Naive thymus-derived CD8-positive, alpha-beta T cell (primary cell): ENCODE measurements at regions of chr2 and their contacts with region 1.

Region 1: DNA sequence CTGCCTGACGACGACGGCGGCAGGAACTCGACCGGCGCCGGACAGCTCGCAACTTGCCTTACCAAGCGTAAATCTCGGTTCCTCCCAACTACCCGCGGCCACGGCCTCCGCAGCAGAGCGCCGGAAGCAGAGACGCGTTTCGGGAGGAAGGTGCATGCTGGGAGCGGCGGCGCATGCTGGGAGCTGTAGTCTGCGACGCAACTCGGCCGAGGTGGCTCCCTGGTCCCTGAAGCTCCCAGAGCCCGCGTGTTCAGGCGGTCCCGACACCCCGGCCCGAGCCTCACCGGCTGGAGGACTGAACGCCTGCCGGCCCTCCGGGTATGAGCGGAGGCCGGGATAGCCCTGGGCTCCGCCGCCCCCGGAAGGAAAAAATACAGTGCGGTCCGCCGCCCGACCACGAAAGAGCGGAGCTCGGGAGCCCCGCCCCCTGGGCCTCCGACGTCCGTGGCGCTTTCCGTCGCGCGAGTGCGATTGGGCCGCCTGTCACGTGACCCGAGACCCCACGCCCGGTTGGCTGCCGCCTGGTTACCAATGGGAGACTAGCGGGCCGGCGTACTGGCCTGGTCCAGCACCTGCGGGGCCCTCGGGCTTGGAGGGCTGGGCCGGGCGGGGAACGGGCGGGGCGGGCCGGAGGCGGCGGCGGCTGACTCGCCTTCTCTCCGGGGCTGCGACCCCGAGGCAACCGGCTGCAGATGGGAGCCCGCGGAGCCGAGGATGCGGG is at the start of gene CAPN10:
- DNase-seq: peak; percentile 91 to 99 (median 96)
- ATAC-seq: peak; percentile 86 to 88
- H3K4me3 Mint-ChIP-seq: peak within 1 kb of the TSS; percentile 91 to 97 (median 96)
- H3K27ac Mint-ChIP-seq: peak within 1 kb of the TSS; percentile 88 to 97 (median 95)
- H3K4me1 Mint-ChIP-seq: peaks cover 30 to 76% (median 56%) of the 10 kb centered on the region in 4 donors
- H3K27me3 Mint-ChIP-seq: no peaks in the 10 kb centered on the region
- polyA plus RNA-seq, gene CAPN10: 6.7 to 21.4 (median 9.8) TPM

Region 2: DNA sequence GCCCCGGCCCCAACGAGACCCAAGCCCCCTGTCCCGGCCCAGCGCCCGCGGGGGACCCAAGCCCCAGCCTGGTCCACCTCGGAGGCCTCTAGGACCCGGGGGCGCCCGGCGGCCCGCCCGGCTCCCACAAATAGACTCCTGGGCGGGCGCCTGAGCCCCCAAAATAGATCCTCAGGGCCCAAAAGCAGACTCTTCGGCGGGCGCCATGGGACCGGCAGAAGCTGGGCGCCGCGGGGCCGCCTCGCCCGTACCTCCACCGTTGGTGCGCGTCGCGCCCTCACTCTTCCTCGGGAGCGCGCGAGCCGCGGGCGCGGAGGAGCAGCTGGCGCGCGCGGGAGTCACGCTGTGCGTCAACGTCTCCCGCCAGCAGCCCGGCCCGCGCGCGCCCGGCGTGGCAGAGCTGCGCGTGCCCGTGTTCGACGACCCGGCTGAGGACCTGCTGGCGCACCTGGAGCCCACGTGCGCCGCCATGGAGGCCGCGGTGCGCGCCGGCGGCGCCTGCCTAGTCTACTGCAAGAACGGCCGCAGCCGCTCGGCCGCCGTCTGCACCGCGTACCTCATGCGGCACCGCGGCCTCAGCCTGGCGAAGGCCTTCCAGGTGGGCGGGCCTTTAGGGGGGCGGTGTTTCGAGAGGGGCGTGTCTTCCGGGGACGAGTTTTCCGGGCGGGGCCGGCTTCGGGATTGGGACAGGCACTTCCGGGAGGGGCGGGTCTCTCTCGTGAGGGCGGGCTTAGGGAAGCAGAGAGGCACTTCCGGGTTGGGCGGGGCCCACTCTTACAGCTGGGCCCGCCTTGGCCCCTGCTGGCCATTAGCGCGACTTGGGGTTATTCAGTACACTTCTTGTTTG is 25.7 kb before region 1 on chr2:
- POLR2A ChIA-PET with region 1: interaction called, 461 read pairs
- DNase-seq: peak; percentile 98 to 100 (median 99)
- ATAC-seq: peak; percentile 50 to 58
- H3K4me3 Mint-ChIP-seq: peak overlapping the region; percentile 80 to 94 (median 85)
- H3K27ac Mint-ChIP-seq: peak overlapping the region; percentile 81 to 97 (median 94)
- H3K4me1 Mint-ChIP-seq: peaks cover 42 to 81% (median 73%) of the 10 kb centered on the region in 4 donors
- H3K27me3 Mint-ChIP-seq: no peaks in the 10 kb centered on the region